Naive thymus-derived CD8-positive, alpha-beta T cell (primary cell): ENCODE measurements at regions of chr19 and their contacts with region 1.

Region 1: GRCh38 chr19:40444192-40445028 is at the start of gene SERTAD3:
- DNase-seq: peak; percentile 94 to 99 (median 97)
- ATAC-seq: peak; percentile 71 to 72
- H3K4me3 Mint-ChIP-seq: peak within 1 kb of the TSS; percentile 95 to 100 (median 99)
- H3K27ac Mint-ChIP-seq: peak within 1 kb of the TSS; percentile 89 to 99 (median 96)
- H3K4me1 Mint-ChIP-seq: peaks cover 16 to 25% (median 20%) of the 10 kb centered on the region in 4 donors
- H3K27me3 Mint-ChIP-seq: no peaks in the 10 kb centered on the region
- polyA plus RNA-seq, gene SERTAD3: 2.3 to 9.2 (median 2.9) TPM

Region 2: DNA sequence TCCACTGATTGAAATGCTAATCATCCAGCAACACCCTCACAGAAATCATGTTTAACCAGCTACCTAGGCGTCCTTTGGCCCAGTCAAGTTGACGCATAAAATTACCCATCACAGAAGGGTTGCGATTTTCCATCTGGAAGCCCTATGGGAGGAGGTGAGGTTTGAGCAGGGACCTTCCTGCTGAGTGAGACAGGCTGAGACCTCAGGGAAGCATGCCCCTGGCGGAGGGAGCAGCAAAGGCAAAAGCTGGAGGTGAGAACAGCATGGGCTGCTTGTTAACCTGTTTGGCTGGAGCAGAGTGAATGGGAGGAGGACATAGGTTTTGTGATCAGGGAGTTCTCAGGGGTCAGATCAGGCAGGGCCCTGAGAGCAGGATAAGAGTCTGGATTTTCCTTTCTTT is 233.5 kb before region 1 on chr19:
- POLR2A ChIA-PET with region 1: no interaction called
- DNase-seq: no peak
- ATAC-seq: no peak
- H3K4me3 Mint-ChIP-seq: no peak overlapping the region
- H3K27ac Mint-ChIP-seq: no peak overlapping the region
- H3K4me1 Mint-ChIP-seq: no peaks in the 10 kb centered on the region
- H3K27me3 Mint-ChIP-seq: peaks cover 0 to 2% (median 0%) of the 10 kb centered on the region in 5 donors

Region 3: DNA sequence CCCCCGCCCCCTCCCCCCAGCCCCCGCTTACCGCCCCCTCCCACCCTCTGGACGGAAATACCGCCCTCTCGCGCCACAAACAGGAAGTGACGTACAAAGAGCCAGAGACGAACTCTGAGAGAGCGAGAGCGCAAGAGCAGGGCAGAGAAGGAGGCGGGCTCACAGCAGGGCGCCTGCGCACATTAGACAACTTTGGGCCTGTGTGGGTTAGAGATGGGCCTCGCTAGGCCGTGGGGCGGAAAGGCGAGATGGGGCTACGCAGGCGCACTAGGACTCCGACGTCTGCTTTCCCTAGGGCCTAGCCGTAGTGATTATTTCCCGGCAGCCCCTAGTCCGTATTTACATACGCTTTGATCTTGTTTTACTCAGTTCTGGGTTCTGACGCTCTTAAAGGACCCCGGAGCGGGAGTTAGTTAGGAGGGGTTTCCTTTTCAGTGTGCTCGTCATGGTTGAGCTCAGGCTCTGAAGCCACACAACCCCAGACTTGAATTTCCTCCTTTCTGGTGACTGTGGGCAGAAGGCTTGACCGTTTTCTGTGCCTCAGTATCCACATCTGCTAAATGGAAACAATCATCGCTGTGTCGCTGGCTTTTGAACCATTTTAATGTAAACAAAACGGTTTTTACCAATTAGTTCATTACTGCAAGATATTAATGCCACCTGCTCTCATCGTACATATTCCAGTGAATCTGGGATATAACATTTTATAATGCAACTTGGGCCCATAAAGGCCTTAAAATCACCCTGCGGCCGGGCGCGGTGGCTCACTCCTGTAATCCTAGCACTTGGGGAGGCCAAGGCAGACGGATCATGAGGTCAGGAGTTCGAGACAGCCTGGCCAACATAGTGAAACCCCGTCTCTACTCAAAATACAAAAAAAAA is 158.8 kb before region 1 on chr19:
- POLR2A ChIA-PET with region 1: interaction called, 18 read pairs
- DNase-seq: peak; percentile 92 to 100 (median 98)
- ATAC-seq: peak; percentile 69 to 77
- H3K4me3 Mint-ChIP-seq: peak overlapping the region; percentile 79 to 99 (median 86)
- H3K27ac Mint-ChIP-seq: peak overlapping the region; percentile 94 to 100 (median 98)
- H3K4me1 Mint-ChIP-seq: peaks cover 18 to 54% (median 50%) of the 10 kb centered on the region in 4 donors
- H3K27me3 Mint-ChIP-seq: no peaks in the 10 kb centered on the region

Region 4: DNA sequence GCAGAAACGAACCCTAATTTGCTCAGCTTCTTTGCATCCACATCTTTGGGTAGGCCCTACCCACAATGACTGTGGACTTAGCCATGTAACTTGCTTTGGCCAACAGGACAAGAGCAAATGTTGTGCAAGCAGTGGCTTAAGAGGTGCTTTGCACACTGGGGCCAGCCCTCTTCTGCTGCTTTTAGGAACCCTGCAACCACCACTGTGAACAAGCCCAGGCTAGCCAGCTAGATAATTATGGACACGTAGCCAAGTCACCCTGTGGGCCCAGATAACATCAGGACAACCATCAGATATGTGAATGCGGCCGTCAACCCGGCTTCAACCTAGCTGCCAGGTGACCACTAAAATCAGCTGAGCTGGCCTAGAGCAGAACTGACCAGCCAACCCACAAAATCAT is 113.3 kb before region 1 on chr19:
- POLR2A ChIA-PET with region 1: no interaction called
- DNase-seq: no peak
- ATAC-seq: no peak
- H3K4me3 Mint-ChIP-seq: no peak overlapping the region
- H3K27ac Mint-ChIP-seq: no peak overlapping the region
- H3K4me1 Mint-ChIP-seq: peaks cover 0 to 2% (median 0%) of the 10 kb centered on the region in 4 donors
- H3K27me3 Mint-ChIP-seq: no peaks in the 10 kb centered on the region

Region 5: DNA sequence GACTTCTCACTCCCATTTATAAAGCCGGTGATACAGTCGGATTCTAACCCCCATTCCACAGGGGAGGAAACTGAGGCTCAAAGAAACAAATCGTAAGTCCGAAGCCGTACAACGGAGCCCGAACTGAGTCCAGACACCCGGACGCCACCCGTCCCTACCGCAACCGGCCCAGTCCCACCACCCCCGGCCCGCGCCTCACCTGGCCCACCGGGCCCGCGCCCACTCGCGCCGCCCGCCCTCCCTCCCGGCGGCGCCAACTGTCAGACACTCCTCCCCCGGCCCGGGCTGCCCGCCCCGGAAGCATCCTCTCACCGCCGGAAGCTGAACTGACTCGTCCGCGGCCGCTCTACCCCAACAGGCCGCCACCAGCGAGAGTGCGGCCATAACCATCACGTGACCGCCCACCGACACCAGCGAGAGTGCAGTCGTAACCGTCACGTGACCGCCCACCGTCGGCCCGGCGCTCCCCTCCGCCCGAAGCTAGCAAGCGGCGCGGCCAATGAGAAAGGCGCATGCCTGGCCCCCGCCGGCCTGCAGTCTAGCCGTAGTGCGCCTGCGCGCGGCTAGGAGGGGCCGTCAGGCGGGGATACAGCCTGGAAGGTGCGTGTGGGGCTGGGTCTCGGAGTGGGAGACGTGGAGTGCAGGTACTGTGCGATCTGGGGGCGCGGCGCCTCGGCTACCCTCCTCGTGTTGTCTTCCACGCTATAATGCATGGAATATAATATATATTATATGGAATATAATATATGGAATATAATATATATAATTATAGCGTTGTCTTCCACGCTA is 96.1 kb before region 1 on chr19 and contains the starts of genes C19orf47 and PLD3:
- POLR2A ChIA-PET with region 1: interaction called, 16 read pairs
- DNase-seq: peak; percentile 88 to 99 (median 98)
- ATAC-seq: peak; percentile 92 to 96
- H3K4me3 Mint-ChIP-seq: peak within 1 kb of the TSS; percentile 83 to 98 (median 94)
- H3K27ac Mint-ChIP-seq: peak within 1 kb of the TSS; percentile 90 to 98 (median 94)
- H3K4me1 Mint-ChIP-seq: peaks cover 18 to 57% (median 39%) of the 10 kb centered on the region in 4 donors
- H3K27me3 Mint-ChIP-seq: no peaks in the 10 kb centered on the region
- polyA plus RNA-seq, gene C19orf47: 6.8 to 10.0 (median 9.8) TPM
- polyA plus RNA-seq, gene PLD3: 46.5 to 87.5 (median 67.5) TPM

Region 6: DNA sequence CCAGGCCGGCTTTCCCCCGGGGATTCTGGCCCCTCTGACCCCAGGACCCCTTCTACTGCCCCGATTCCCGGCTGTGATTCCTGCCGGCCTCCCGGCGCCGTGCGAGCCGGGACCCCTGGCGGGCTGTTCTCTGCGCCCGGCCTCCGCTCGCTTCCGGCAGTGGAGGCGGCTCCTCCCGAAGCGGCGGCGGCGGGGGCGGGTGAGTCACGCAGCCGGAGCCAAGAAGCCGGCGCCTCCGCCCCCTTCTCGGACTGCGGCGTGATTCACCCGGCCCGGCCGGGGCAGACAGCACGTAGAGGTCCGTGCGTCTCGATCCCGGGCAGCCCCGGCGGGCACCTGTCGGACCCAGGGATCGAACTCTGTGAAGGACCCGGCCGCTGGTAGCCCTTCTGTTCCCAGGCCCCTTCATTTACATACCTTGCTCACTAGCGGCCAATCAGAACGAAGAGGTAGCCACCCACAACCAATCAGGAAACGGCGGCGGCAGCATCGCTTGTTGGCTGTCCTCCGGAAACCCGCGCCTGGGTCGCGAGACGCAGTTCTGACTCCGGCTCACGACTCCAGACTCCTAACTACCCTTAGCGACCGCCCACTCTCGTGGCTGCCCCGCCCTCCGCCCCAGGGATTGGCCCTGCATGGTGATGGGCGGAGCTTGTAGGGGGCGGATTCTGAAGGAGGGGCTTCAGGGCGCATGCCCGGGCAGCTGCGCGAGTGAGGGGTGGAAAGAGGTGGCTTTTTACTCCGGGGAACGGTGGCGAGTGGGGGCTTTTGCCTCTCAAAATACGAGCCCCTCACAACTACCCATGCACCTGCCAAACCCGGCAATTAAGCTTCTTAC is 18.7 kb before region 1 on chr19 and contains the start of gene SERTAD1:
- POLR2A ChIA-PET with region 1: interaction called, 73 read pairs
- DNase-seq: peak; percentile 98 to 100 (median 100)
- ATAC-seq: peak; percentile 87 to 92
- H3K4me3 Mint-ChIP-seq: peak within 1 kb of the TSS; percentile 86 to 98 (median 94)
- H3K27ac Mint-ChIP-seq: peak within 1 kb of the TSS; percentile 91 to 100 (median 98)
- H3K4me1 Mint-ChIP-seq: peaks cover 8 to 33% (median 22%) of the 10 kb centered on the region in 4 donors
- H3K27me3 Mint-ChIP-seq: peaks cover 0 to 2% (median 0%) of the 10 kb centered on the region in 5 donors
- polyA plus RNA-seq, gene SERTAD1: 2.6 to 10.4 (median 3.5) TPM

Region 7: GRCh38 chr19:40433391-40434216 is 10.8 kb before region 1 on chr19:
- POLR2A ChIA-PET with region 1: interaction called, 61 read pairs
- DNase-seq: peak in 8 of 10 donors; percentile 26 to 61 (median 47)
- ATAC-seq: peak; percentile 86 to 90
- H3K4me3 Mint-ChIP-seq: peak overlapping the region; percentile 89 to 99 (median 95)
- H3K27ac Mint-ChIP-seq: peak overlapping the region; percentile 94 to 100 (median 98)
- H3K4me1 Mint-ChIP-seq: peaks cover 10 to 27% (median 15%) of the 10 kb centered on the region in 4 donors
- H3K27me3 Mint-ChIP-seq: no peaks in the 10 kb centered on the region

Region 8: DNA sequence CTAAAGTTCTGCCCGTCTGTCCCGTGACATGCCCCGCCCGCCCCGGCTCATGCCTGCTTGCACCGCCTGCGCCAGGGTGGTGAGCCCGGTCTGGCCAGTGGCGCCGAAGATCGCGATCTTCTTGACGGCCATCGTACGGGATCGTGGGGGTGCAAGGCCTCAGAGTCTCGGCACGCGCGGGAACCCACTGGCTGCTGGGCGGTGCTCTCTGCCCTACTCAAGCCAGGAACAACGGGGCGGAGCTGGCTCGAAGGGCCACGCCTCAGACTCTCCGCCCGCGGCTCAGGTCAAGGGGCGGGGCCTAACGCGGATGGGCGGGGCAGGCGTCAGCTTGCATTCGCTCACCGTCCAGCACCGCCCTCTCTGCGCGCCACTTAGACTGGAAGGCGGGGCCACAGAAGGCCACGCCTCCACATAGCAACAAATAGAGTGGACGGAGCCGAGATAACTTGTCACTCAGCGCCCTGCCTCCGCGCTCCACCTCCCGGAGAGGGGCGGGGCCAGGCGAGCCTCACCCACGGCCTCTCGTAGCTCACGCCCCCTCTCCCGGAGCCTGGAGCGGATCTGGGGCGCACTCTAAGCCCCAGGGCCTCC is 21.2 kb after region 1 on chr19 and contains the start of gene BLVRB:
- POLR2A ChIA-PET with region 1: interaction called, 21 read pairs
- DNase-seq: peak; percentile 98 to 100 (median 99)
- ATAC-seq: peak; percentile 79 to 85
- H3K4me3 Mint-ChIP-seq: peak within 1 kb of the TSS; percentile 78 to 94 (median 88)
- H3K27ac Mint-ChIP-seq: peak within 1 kb of the TSS; percentile 64 to 96 (median 90)
- H3K4me1 Mint-ChIP-seq: peaks cover 25 to 42% (median 28%) of the 10 kb centered on the region in 4 donors
- H3K27me3 Mint-ChIP-seq: peaks cover 5 to 11% (median 8%) of the 10 kb centered on the region in 5 donors
- polyA plus RNA-seq, gene BLVRB: 17.3 to 27.8 (median 22.6) TPM

Region 9: DNA sequence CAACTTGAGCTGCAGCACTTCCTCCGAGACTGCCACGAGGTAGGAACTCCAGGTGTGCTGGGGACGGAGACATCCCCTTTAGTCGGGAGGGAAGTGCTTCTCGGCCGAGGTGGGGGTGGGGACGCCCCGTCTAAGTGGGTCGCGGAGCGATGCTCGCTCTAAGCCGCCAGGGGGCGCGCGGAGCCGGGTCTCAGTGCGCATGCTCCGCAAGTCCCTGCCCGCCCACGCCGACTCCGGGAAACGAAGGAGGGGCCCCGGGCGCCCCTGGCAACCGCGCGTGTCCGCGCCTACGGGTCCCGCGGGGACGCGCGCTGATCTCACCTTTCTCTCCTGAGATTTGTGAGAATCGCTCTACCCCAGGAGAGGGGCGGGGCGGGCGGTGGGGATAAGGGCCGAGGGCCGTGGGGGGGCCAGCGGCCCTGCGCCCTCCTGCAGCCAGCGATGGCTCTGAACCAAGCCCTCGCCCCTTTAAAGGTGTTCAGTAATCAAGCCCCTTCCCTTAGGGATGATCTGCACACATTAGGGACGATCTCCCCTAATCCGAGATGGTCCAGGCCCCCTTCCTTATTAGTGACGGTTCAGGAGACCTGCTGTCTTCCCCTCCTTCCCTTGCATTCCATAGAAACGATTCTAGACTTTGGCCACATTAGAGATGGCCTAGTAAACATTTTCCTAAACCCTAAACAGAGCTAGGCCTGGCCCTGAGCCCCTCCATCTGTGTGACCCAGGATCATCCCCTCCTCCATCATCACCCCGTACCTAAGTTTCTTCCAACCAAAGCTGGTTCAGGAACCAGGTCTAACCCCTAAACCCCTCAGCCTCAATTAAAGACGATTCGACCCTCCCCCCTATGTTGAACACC is 84.9 kb after region 1 on chr19:
- POLR2A ChIA-PET with region 1: no interaction called
- DNase-seq: peak; percentile 83 to 94 (median 90)
- ATAC-seq: peak; percentile 84 to 86
- H3K4me3 Mint-ChIP-seq: peak overlapping the region; percentile 54 to 87 (median 77)
- H3K27ac Mint-ChIP-seq: peak overlapping the region; percentile 1 to 85 (median 60)
- H3K4me1 Mint-ChIP-seq: peaks cover 8 to 19% (median 14%) of the 10 kb centered on the region in 4 donors
- H3K27me3 Mint-ChIP-seq: peaks cover 13 to 34% (median 22%) of the 10 kb centered on the region in 5 donors